ENCODE measurements at regions of chr17 and their contacts with region 1.

Region 1: DNA sequence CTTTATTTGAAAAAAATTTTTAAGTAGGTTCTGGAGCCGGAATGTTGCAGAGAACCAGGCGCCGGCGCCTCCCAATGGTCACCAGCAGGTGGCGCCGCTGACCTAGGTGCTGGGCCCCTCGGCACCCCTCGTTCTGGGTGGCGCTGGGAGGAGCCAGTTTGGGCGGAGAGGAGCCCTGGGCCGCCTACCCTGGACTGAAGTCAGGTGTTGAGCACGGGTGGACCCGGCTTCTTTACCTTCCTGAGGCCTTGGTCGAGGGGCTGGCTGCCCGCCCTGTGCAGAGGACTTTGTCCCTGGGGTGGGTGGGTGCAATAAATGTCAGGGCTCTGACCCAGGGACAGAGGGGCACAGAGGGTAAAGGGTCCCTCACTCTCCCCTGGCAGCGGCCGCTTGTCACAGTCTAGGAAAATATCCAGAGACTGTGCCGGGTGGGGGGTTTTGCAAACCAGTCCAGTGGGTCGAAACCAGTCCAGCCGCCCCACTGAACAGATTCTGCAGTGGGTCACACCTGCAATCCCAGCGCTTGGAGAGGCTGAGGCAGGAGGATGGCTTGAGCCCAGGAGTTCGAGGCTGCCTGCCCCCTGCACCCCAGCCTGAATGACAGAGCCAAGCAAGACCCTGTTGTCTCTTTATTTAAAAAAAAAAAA is 30.1 kb upstream of the TNFRSF13B start:
- DNase-seq: peak; percentile 87

Region 2: GRCh38 chr17:17206124-17206912 is 204.3 kb after region 1 on chr17 and contains the start of gene PLD6:
- intact Hi-C with region 1: loop called (anchors 10 kb)
- DNase-seq: peak; percentile 90
- total RNA-seq, gene PLD6: 1.4 TPM

Region 3: DNA sequence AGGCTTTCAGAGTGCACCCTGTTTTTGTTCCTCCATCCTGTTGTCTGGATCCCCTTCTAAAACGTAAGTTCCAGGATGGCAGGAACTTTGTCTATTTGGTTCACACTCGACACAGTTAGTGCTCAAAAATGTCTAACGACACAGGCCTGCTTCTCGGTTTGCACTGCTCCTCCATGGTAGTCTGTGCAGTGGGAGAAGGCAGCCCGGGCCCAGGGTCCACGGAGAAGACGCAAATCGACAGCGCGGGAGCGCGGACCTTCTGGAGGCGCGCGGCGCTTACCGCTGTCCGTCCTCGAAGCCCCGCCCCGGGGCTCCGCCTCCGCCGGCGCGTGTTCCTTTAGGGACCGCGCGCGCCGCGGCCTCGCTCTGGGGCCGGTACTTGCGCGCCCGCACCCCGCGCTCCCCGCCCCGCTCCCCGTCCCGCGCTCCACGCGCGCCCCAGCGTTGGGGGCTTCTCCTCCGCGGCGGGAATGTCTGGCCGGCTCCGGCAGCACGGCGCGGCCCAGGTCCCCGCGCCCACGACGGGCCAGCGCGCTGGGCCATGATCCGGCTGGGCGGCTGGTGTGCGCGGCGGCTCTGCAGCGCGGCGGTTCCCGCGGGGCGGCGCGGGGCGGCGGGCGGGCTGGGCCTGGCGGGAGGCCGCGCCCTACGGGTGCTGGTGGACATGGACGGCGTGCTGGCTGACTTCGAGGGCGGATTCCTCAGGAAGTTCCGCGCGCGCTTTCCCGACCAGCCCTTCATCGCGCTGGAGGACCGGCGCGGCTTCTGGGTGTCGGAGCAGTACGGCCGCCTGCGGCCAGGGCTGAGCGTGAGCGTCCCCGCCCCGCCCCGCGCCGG is 301.2 kb after region 1 on chr17 and contains the start of gene NT5M:
- intact Hi-C with region 1: loop called (anchors 10 kb)
- DNase-seq: peak; percentile 91
- total RNA-seq, gene NT5M: 7.5 TPM